HEK293T (cell line): ENCODE measurements at regions of chr6 and their contacts with region 1.

Region 1: GRCh38 chr6:36851149-36851614 is 11.9 kb upstream of the CPNE5 start:
- DNase-seq: peak; percentile 64

Region 2: GRCh38 chr6:36765594-36766398 is 85.4 kb before region 1 on chr6:
- CTCF ChIA-PET with region 1: interaction called, 41 read pairs
- POLR2A ChIA-PET with region 1: no interaction called
- DNase-seq: peak; percentile 83

Region 3: GRCh38 chr6:36809941-36810803 is 41.0 kb before region 1 on chr6:
- CTCF ChIA-PET with region 1: interaction called, 10 read pairs
- POLR2A ChIA-PET with region 1: no interaction called
- DNase-seq: no peak